Stomach (tissue), 19 donors: ENCODE measurements at regions of chr10 and their contacts with region 1.

Region 1: DNA sequence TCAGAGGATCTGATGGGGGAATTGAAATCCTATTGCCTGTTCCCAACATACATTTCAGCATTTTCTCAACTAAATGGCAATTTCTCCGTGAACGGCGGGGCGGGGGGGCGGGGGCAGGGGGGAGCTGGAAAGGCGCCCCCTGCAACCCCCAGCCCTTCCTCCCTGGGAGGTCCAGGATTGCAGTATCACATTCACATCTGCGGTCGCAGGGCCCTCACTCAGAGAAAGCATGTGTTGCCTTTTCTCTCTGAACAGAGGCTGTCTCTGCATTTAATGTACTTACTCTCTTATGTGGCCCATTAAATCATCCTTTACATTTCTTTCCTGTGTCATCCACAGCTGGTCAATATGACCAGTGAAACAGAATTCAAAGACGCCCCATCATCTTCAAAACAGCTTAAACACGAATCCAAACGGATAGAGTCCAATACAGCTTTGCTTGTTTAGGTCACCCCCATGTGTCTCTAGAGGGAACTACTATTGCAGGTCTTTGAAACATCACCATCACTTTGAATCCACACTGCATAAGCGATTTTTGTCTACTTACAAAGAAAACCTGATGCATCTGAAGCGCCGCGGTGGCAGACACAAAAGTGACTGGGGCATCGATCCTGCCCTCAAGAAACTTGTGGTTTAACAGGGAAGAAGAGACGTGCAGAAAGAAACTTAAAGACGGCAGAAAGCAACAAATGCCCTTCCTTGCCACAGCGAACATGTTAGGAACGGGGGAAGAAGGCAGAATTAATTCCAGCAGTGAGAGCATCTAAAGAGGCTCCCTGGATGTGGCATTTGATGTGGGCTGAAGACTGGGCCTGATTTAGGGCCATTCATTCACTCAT is 17.0 kb upstream of the ECHDC3 start:
- DNase-seq: peak in 1 of 2 donors; percentile 79
- H3K4me3 ChIP-seq: no peak overlapping the region
- H3K27ac ChIP-seq: peak overlapping the region in 4 of 5 donors; percentile 2 to 32 (median 19)
- H3K4me1 ChIP-seq: peaks cover 0 to 12% (median 3%) of the 10 kb centered on the region in 4 donors
- H3K27me3 ChIP-seq: no peaks in the 10 kb centered on the region
- CTCF ChIP-seq: peak in 5 of 7 experiments; percentile 45 to 65 (median 48)
- EP300 ChIP-seq: no peak
- POLR2A ChIP-seq: no peak

Region 2: DNA sequence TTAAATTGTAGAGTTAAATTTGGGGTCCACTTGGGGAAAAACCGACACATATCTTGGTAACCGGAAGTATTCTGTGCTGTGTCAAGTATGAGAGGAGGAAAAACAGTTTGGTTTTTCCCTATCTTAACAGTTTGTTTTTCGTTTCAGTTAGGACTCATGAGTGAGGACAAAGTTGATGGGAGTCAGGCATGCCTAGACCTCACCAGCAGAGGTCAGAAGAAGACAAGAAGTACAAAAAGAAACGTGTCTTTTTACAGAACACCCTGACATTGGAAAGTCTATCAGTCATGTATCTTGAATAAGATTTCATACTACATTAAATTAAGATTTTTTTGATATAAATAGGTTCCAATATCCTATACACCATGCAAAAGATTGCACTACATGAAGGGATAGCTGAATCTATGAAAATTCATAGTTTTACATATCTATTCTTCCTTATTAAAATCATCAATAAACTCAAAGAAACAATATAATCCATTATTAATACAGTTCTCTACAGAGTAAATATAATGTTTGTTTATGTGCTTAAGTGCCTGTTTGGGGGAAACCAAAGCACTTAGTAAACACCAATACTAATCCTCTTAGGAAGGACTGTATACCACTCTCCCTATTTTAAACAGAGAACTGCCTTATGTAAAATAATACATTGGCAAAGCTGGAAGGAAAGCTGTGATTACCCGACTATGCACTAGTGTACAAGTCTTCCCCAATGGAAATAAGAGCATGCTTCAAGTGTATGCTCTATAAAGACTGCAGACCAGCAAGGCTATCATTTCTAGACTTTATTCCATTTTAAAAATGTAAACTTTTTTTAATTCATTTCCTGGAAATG is 209.3 kb before region 1 on chr10:
- intact Hi-C with region 1: loop called (anchors 5 kb)
- DNase-seq: peak; percentile 56 to 87
- H3K4me3 ChIP-seq: no peak overlapping the region
- H3K27ac ChIP-seq: no peak overlapping the region
- H3K4me1 ChIP-seq: peaks cover 0 to 15% (median 4%) of the 10 kb centered on the region in 4 donors
- H3K27me3 ChIP-seq: no peaks in the 10 kb centered on the region
- CTCF ChIP-seq: peak in 5 of 7 experiments; percentile 65 to 88 (median 74)
- EP300 ChIP-seq: no peak
- POLR2A ChIP-seq: no peak